Testis (tissue), 5 donors: ENCODE measurements at regions of chr11 and their contacts with region 1.

Region 1: DNA sequence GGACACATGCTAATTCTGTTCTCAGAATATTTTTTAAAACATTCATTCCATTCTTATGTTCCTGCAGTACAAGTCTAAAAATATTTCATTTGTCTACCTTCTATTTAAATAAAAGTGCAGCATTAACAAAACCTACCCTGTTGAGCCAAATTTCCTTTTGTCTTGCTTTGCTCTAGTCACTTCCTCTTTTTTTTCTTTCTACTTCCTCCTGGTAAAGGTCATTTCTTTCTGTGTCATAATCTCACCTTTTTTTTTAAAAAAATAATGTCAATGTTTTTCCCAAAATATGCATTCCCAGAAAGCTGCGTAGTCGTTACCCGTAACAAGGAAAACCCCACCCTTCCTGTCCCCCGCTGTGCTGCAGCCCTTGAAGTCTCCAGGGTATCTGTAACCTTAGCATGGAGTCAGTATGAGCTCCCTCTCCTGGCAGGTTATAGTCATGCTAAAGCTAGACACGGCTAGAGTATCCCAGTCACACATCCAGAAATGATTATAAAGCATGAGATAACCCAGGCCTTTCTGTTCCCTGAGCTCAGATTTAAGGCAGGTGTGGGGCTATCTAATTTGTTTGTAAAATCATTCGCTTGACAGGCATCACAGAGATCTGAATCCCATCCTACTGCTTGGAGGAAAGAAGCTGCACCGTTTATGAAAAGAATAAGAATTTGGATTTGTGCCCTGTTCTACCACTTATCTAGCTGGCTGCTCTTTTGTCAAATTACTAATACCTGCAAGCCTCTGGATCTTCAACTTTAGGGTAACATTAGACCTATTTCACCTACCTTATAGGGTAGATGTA is 51.1 kb upstream of the EED start:
- DNase-seq: peak; percentile 75
- H3K4me3 ChIP-seq: no peak overlapping the region
- H3K27ac ChIP-seq: no peak overlapping the region
- H3K4me1 ChIP-seq: no peaks in the 10 kb centered on the region
- H3K27me3 ChIP-seq: no peaks in the 10 kb centered on the region
- CTCF ChIP-seq: peak; percentile 47 to 58 (median 58)
- POLR2A ChIP-seq: no peak

Region 2: GRCh38 chr11:86041975-86042378 is 151.5 kb before region 1 on chr11:
- intact Hi-C with region 1: loop called (anchors 10 kb)
- DNase-seq: peak; percentile 89
- H3K4me3 ChIP-seq: no peak overlapping the region
- H3K27ac ChIP-seq: peak overlapping the region; percentile 9 to 65
- H3K4me1 ChIP-seq: peaks cover 12% of the 10 kb centered on the region
- H3K27me3 ChIP-seq: no peaks in the 10 kb centered on the region
- CTCF ChIP-seq: peak; percentile 86 to 98 (median 96)
- POLR2A ChIP-seq: no peak